ENCODE measurements at regions of chr1 and their contacts with region 1.

Region 1: GRCh38 chr1:206544562-206545257 is 37.4 kb downstream of the RASSF5 start:
- DNase-seq: peak; percentile 90
- ATAC-seq: peak; percentile 80
- H3K4me3 Mint-ChIP-seq: no peak overlapping the region
- H3K27ac Mint-ChIP-seq: peak overlapping the region; percentile 55
- H3K4me1 Mint-ChIP-seq: peaks cover 26% of the 10 kb centered on the region
- H3K27me3 Mint-ChIP-seq: no peaks in the 10 kb centered on the region

Region 2: GRCh38 chr1:206521143-206521542 is 23.6 kb before region 1 on chr1:
- CTCF ChIA-PET with region 1: interaction called, 10 read pairs
- POLR2A ChIA-PET with region 1: interaction called, 5 read pairs
- intact Hi-C with region 1: no loop called
- DNase-seq: no peak
- ATAC-seq: no peak
- H3K4me3 Mint-ChIP-seq: no peak overlapping the region
- H3K27ac Mint-ChIP-seq: no peak overlapping the region
- H3K4me1 Mint-ChIP-seq: peaks cover 3% of the 10 kb centered on the region
- H3K27me3 Mint-ChIP-seq: no peaks in the 10 kb centered on the region

Region 3: GRCh38 chr1:206563367-206564207 is 18.9 kb after region 1 on chr1:
- CTCF ChIA-PET with region 1: interaction called, 621 read pairs
- POLR2A ChIA-PET with region 1: no interaction called
- intact Hi-C with region 1: no loop called
- DNase-seq: peak; percentile 22
- ATAC-seq: peak; percentile 4
- H3K4me3 Mint-ChIP-seq: peak overlapping the region; percentile 95
- H3K27ac Mint-ChIP-seq: peak overlapping the region; percentile 99
- H3K4me1 Mint-ChIP-seq: peaks cover 87% of the 10 kb centered on the region
- H3K27me3 Mint-ChIP-seq: no peaks in the 10 kb centered on the region

Region 4: DNA sequence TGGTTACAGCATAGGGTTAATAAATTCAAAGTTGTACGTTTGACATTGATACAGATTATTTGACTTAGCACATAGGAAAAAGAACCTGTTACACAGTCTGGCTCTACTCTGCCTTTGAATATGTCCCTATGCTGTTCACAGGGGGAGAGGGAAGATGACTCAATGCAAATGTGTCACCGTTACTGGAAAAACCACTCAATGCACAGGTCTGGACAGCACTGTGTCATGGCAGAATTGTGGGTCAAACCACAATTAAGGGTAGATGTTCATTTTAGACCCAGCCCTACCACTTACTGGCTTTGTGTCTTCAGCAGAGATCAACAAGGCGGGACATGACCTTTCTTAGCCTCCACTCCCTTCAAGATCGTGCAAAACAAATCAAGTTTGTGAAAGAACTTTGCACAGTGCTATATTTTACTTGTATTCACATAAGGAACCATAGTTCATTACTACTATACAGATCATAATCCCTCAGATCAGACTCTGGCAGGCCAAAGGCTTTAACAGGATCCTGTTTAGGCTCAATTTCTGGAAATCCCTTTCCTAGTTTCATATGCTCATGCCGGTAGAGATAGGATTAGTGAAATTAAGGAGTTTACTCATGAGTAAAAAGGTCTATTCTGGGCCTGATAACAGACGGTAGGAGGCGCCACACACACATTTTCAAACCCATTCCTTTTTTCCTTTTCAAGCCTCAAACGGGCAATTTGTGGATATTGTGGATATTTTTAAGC is 45.5 kb after region 1 on chr1:
- CTCF ChIA-PET with region 1: interaction called, 621 read pairs
- POLR2A ChIA-PET with region 1: interaction called, 5 read pairs
- intact Hi-C with region 1: loop called in 1 of 2 experiments (anchors 2 kb)
- DNase-seq: peak; percentile 81
- ATAC-seq: peak; percentile 94
- H3K4me3 Mint-ChIP-seq: peak overlapping the region; percentile 59
- H3K27ac Mint-ChIP-seq: peak overlapping the region; percentile 98
- H3K4me1 Mint-ChIP-seq: peaks cover 65% of the 10 kb centered on the region
- H3K27me3 Mint-ChIP-seq: no peaks in the 10 kb centered on the region

Region 5: DNA sequence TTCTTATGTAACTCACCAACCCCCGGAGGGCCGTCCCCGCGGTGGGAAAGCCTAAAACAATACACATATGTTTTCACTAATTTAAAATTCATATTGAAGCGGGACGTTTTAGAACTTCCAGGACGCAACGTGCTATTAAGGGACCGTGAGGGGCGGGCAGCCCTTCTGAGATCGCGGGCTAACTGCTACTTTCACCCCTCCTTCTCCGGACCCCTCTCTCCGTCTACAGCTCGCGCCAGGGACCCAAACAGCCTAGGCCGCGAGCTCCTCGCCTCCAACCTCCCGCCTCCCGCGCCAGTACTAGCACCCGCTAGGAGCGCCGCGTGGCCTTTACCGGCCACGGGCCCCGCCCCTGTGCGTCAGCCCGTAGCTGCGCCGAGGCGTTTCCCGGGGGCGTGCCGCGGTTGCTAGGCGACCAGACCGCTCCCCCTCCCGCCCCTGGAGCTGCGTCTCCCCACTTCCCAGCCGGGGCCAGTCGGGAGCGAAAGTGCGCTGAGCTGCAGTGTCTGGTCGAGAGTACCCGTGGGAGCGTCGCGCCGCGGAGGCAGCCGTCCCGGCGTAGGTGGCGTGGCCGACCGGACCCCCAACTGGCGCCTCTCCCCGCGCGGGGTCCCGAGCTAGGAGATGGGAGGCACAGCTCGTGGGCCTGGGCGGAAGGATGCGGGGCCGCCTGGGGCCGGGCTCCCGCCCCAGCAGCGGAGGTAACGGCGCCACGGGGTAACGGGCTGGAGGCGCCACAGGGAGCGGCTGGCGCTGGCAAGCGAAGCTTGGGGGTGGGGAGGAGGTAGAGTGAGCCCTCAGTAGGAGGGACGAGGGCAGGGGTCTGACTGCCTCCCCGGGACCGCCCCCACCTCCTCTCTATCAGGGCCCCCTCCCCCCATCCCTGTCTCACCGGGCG is 90.6 kb after region 1 on chr1 and contains the start of gene DYRK3:
- CTCF ChIA-PET with region 1: interaction called, 14 read pairs
- POLR2A ChIA-PET with region 1: no interaction called
- intact Hi-C with region 1: no loop called
- DNase-seq: peak; percentile 97
- ATAC-seq: peak; percentile 93
- H3K4me3 Mint-ChIP-seq: peak within 1 kb of the TSS; percentile 76
- H3K27ac Mint-ChIP-seq: peak within 1 kb of the TSS; percentile 87
- H3K4me1 Mint-ChIP-seq: peaks cover 27% of the 10 kb centered on the region
- H3K27me3 Mint-ChIP-seq: peaks cover 7% of the 10 kb centered on the region
- total RNA-seq, gene DYRK3: 8.3 to 8.7 TPM

Region 6: GRCh38 chr1:206839857-206840256 is 295.1 kb after region 1 on chr1:
- CTCF ChIA-PET with region 1: no interaction called
- POLR2A ChIA-PET with region 1: no interaction called
- intact Hi-C with region 1: no loop called
- DNase-seq: no peak
- ATAC-seq: no peak
- H3K4me3 Mint-ChIP-seq: no peak overlapping the region
- H3K27ac Mint-ChIP-seq: no peak overlapping the region
- H3K4me1 Mint-ChIP-seq: peaks cover 2% of the 10 kb centered on the region
- H3K27me3 Mint-ChIP-seq: no peaks in the 10 kb centered on the region

Region 7: DNA sequence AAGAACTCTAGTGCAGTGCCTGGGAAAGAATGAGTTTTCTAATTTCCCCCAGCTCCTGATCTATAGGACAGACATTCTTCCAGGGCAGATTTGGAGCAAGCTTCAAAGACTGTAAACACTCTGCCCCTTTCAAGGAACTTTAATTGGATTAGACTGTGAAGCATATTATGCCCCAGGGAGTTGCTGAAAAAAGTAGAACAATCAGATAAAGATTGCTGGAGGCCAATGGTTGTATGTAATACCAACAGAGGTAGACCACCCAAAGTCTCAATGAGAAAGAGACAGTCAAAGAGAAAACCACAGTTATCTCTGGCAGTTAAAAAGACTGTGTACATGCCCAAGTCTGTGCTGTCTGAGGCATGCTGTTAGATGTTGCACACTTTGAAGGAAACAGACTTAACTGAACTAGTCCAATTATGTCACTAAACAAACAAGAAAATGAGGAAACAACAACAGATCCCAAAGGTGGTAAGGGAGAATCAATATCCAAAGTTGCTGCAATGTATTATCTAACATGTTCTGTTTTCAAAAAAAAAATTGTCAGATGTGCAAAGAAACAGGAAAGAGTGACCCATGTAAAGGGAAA is 583.7 kb after region 1 on chr1:
- CTCF ChIA-PET with region 1: no interaction called
- POLR2A ChIA-PET with region 1: no interaction called
- intact Hi-C with region 1: no loop called
- DNase-seq: no peak
- ATAC-seq: no peak
- H3K4me3 Mint-ChIP-seq: no peak overlapping the region
- H3K27ac Mint-ChIP-seq: no peak overlapping the region
- H3K4me1 Mint-ChIP-seq: no peaks in the 10 kb centered on the region
- H3K27me3 Mint-ChIP-seq: peaks cover 5% of the 10 kb centered on the region

Region 8: DNA sequence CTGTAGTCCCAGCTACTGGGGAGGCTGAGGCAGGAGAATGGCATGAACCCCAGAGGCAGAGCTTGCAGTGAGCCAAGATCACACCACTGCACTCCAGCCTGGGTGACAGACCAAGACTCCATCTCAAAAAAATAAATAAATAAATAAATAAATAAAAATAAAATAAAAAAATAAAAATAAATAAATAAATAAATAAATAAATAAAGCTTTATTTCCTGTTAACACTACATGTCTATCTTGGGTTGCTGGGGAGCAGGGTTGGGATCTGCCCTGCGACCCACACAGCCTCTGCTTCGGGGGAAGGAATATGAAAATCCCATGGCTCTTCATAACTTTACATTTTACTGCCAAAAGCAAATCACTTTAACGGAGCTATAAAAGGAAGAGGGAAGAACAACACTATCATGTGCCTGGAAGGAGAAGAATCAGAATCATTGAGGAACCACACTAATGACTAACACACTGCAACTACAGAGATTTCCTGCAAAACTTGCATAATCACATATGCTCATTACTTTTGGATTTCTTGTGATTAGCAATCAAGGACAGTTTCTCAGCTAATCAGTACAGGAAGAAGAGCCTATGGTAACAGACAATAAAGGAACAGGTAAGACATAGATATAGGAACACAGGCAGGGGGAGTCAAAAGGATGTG is 704.0 kb after region 1 on chr1:
- CTCF ChIA-PET with region 1: no interaction called
- POLR2A ChIA-PET with region 1: no interaction called
- intact Hi-C with region 1: no loop called
- DNase-seq: no peak
- ATAC-seq: no peak
- H3K4me3 Mint-ChIP-seq: no peak overlapping the region
- H3K27ac Mint-ChIP-seq: no peak overlapping the region
- H3K4me1 Mint-ChIP-seq: peaks cover 3% of the 10 kb centered on the region
- H3K27me3 Mint-ChIP-seq: peaks cover 2% of the 10 kb centered on the region

Region 9: GRCh38 chr1:207454046-207454964 is 909.6 kb after region 1 on chr1 and contains the start of gene CR2:
- CTCF ChIA-PET with region 1: no interaction called
- POLR2A ChIA-PET with region 1: no interaction called
- intact Hi-C with region 1: no loop called
- DNase-seq: peak; percentile 73
- ATAC-seq: peak; percentile 83
- H3K4me3 Mint-ChIP-seq: peak within 1 kb of the TSS; percentile 53
- H3K27ac Mint-ChIP-seq: peak within 1 kb of the TSS; percentile 7
- H3K4me1 Mint-ChIP-seq: peaks cover 12% of the 10 kb centered on the region
- H3K27me3 Mint-ChIP-seq: peaks cover 25% of the 10 kb centered on the region
- total RNA-seq, gene CR2: 0.28 to 0.39 TPM

Measured in activated CD4-positive, alpha-beta T cell treated with anti-CD3 and anti-CD28 coated beads for 36 hours (primary cell).